Calu3 (cell line): ENCODE measurements at regions of chr2 and their contacts with region 1.

Region 1: DNA sequence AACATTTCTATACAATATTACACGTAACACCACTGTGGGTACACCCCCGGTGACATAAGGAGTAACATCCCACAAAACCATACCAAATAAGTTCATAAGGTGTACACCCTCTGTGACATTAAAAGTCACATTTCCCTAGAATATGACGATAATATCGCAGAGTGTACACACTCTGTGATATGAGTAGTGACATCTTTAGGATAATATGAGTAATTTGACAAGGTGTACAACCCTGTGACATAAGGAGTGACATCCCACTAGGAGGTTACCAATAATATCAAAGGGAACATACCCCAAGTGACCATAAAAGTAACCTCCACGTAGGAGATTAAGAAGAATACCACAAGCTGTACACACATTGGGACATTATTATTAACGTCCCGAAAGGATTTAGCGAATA is 24.0 kb upstream of the TEX261 start:
- DNase-seq: no peak
- H3K4me3 Mint-ChIP-seq: no peak overlapping the region
- H3K27ac Mint-ChIP-seq: no peak overlapping the region
- H3K4me1 Mint-ChIP-seq: peaks cover 9% of the 10 kb centered on the region
- H3K27me3 Mint-ChIP-seq: no peaks in the 10 kb centered on the region
- CTCF ChIP-seq: no peak

Region 2: GRCh38 chr2:70958759-70959158 is 59.9 kb before region 1 on chr2:
- CTCF ChIA-PET with region 1: no interaction called
- intact Hi-C with region 1: no loop called
- DNase-seq: no peak
- H3K4me3 Mint-ChIP-seq: no peak overlapping the region
- H3K27ac Mint-ChIP-seq: no peak overlapping the region
- H3K4me1 Mint-ChIP-seq: no peaks in the 10 kb centered on the region
- H3K27me3 Mint-ChIP-seq: peaks cover 89% of the 10 kb centered on the region
- CTCF ChIP-seq: no peak

Region 3: DNA sequence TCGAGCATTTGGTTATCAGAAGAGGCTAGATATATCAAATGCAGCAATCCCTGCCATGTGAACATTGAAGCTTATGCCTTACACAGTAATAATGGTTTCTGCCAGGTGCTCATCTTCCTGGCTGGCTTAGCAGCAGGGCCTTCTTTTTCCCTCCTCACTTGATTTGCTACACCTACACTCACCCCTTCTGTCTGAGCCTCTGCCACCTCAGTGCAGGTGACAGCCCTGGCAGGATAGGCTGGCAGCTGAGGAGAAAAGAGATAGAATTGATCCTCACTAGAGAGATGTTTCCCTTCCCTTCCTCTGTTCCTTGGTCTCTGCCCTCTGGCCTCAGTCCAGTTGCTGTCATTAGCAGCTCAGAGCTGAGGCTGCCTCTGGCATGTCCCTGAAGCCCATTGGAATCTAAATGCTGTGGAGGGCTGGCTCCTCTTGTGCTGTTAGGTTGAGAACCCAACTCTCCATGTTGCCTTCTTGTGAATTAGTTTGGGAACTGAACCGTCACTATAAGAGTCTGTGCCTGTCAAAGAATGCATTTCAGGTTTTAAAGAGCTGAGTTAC is 130.0 kb after region 1 on chr2:
- CTCF ChIA-PET with region 1: no interaction called
- intact Hi-C with region 1: loop called (anchors 5 kb)
- DNase-seq: no peak
- H3K4me3 Mint-ChIP-seq: no peak overlapping the region
- H3K27ac Mint-ChIP-seq: no peak overlapping the region
- H3K4me1 Mint-ChIP-seq: no peaks in the 10 kb centered on the region
- H3K27me3 Mint-ChIP-seq: peaks cover 3% of the 10 kb centered on the region
- CTCF ChIP-seq: no peak